ENCODE measurements at regions of chr2 and their contacts with region 1.

Region 1: GRCh38 chr2:10812362-10813162 is at the start of gene PDIA6:
- DNase-seq: peak; percentile 97
- ATAC-seq: peak; percentile 86
- H3K4me3 ChIP-seq: peak within 1 kb of the TSS; percentile 62 to 97 (median 72)
- H3K4me3 Mint-ChIP-seq: peak within 1 kb of the TSS; percentile 92
- H3K27ac ChIP-seq: peak within 1 kb of the TSS; percentile 71 to 80
- H3K27ac Mint-ChIP-seq: peak within 1 kb of the TSS; percentile 93
- H3K4me1 ChIP-seq: peaks cover 30 to 40% of the 10 kb centered on the region in 2 donors
- H3K4me1 Mint-ChIP-seq: peaks cover 39% of the 10 kb centered on the region
- H3K27me3 ChIP-seq: no peaks in the 10 kb centered on the region
- H3K27me3 Mint-ChIP-seq: no peaks in the 10 kb centered on the region
- CTCF ChIP-seq: no peak
- total RNA-seq, gene PDIA6: 47.9 and 53.8 TPM in 2 replicates

Region 2: DNA sequence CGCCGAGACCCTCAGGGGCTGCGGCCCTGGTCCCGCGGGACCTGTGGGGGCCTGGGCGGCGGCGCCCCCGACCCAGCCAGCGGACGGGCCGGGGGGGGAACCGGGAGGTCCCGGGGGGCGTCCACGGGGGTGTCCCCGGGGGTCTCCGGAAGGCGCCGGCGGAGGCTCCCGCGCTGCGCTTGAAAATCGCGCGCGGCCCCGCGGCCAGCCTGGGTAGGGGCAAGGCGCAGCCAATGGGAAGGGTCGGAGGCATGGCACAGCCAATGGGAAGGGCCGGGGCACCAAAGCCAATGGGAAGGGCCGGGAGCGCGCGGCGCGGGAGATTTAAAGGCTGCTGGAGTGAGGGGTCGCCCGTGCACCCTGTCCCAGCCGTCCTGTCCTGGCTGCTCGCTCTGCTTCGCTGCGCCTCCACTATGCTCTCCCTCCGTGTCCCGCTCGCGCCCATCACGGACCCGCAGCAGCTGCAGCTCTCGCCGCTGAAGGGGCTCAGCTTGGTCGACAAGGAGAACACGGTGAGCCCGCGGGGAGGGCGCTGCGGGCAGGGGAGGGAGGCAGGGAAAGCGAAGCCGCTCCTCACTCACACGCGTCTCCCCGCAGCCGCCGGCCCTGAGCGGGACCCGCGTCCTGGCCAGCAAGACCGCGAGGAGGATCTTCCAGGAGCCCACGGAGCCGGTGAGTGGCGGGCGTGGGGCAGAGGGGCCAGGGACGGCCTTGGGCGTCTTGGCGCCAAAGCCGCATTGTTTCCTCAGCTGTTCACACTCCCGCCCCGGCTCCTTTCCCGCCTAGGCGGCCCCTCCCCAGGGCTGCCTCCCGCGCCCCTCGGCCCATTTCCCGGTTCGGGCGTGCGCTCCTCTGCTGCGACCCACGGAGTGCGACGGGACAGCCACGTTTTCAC is 689.9 kb before region 1 on chr2 and contains the start of gene RRM2:
- CTCF ChIA-PET with region 1: no interaction called
- POLR2A ChIA-PET with region 1: no interaction called
- intact Hi-C with region 1: loop called (anchors 2 kb)
- DNase-seq: peak; percentile 91
- ATAC-seq: peak; percentile 82
- H3K4me3 ChIP-seq: peak within 1 kb of the TSS in 4 of 5 experiments; percentile 42 to 77 (median 54)
- H3K4me3 Mint-ChIP-seq: peak within 1 kb of the TSS; percentile 98
- H3K27ac ChIP-seq: no peak within 1 kb of the TSS
- H3K27ac Mint-ChIP-seq: peak within 1 kb of the TSS; percentile 59
- H3K4me1 ChIP-seq: peaks cover 29 to 32% of the 10 kb centered on the region in 2 donors
- H3K4me1 Mint-ChIP-seq: peaks cover 30% of the 10 kb centered on the region
- H3K27me3 ChIP-seq: peaks cover 0 to 17% (median 8%) of the 10 kb centered on the region in 4 experiments
- H3K27me3 Mint-ChIP-seq: peaks cover 10% of the 10 kb centered on the region
- CTCF ChIP-seq: no peak
- total RNA-seq, gene RRM2: 1.2 and 1.3 TPM in 2 replicates

Region 3: GRCh38 chr2:10514743-10515142 is 297.8 kb before region 1 on chr2:
- CTCF ChIA-PET with region 1: no interaction called
- POLR2A ChIA-PET with region 1: no interaction called
- intact Hi-C with region 1: no loop called
- DNase-seq: no peak
- ATAC-seq: no peak
- H3K4me3 ChIP-seq: no peak overlapping the region
- H3K4me3 Mint-ChIP-seq: no peak overlapping the region
- H3K27ac ChIP-seq: no peak overlapping the region
- H3K27ac Mint-ChIP-seq: no peak overlapping the region
- H3K4me1 ChIP-seq: no peaks in the 10 kb centered on the region
- H3K4me1 Mint-ChIP-seq: no peaks in the 10 kb centered on the region
- H3K27me3 ChIP-seq: peaks cover 0 to 4% (median 0%) of the 10 kb centered on the region in 4 experiments
- H3K27me3 Mint-ChIP-seq: no peaks in the 10 kb centered on the region
- CTCF ChIP-seq: no peak

Region 4: DNA sequence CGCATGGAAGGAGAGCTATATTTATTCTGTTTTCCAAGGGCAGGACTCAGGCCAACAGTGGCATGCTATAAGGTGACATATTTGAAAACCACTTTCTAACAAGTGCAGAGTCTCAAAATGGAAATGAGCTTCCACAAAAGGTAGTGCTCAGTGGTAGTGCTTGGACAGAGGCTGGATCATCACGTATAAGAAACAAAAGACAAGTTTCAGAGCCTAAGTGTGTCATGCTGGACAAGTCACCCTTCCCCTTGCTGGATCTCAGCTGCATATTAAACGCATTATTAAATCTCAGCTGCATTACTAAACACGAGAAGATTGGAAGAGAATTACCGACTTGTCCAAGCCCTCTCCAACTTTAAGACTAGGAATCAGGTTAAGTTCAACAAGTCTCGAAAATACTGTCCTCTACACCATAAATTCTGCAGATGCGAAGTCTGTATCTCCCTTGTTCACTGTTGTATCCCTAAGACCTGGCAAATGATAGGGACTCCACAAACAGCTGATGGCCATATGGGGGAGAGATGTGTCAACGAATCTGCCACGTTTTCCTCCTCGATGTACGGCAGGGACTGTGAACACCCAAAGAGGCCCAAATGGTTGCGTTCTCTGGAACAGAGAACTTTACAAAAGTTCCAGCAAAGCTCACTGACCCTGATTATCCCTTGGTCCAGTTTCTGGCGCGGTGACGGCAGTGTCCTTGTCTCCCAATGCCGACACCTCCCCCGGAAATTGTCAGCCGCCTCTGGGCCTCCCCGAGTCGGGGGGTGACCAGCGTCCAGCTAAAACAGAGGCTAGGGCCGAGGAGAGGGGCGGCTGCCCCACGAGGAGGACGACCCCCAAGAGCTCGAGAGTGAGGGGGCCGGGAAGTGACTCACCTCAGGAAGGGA is 123.4 kb before region 1 on chr2:
- CTCF ChIA-PET with region 1: no interaction called
- POLR2A ChIA-PET with region 1: interaction called, 7 read pairs
- intact Hi-C with region 1: loop called (anchors 1 kb)
- DNase-seq: no peak
- ATAC-seq: no peak
- H3K4me3 ChIP-seq: peak overlapping the region; percentile 73 to 100 (median 98)
- H3K4me3 Mint-ChIP-seq: no peak overlapping the region
- H3K27ac ChIP-seq: peak overlapping the region; percentile 87 to 92
- H3K27ac Mint-ChIP-seq: no peak overlapping the region
- H3K4me1 ChIP-seq: peaks cover 19 to 24% of the 10 kb centered on the region in 2 donors
- H3K4me1 Mint-ChIP-seq: peaks cover 9% of the 10 kb centered on the region
- H3K27me3 ChIP-seq: no peaks in the 10 kb centered on the region
- H3K27me3 Mint-ChIP-seq: no peaks in the 10 kb centered on the region
- CTCF ChIP-seq: no peak

Region 5: GRCh38 chr2:10832203-10832936 is 19.8 kb after region 1 on chr2:
- CTCF ChIA-PET with region 1: interaction called, 10 read pairs
- POLR2A ChIA-PET with region 1: no interaction called
- intact Hi-C with region 1: no loop called
- DNase-seq: peak; percentile 82
- ATAC-seq: peak; percentile 84
- H3K4me3 ChIP-seq: no peak overlapping the region
- H3K4me3 Mint-ChIP-seq: peak overlapping the region; percentile 15
- H3K27ac ChIP-seq: no peak overlapping the region
- H3K27ac Mint-ChIP-seq: no peak overlapping the region
- H3K4me1 ChIP-seq: peaks cover 10 to 12% of the 10 kb centered on the region in 2 donors
- H3K4me1 Mint-ChIP-seq: peaks cover 8% of the 10 kb centered on the region
- H3K27me3 ChIP-seq: peaks cover 0 to 42% (median 8%) of the 10 kb centered on the region in 4 experiments
- H3K27me3 Mint-ChIP-seq: peaks cover 43% of the 10 kb centered on the region
- CTCF ChIP-seq: peak; percentile 98

Region 6: DNA sequence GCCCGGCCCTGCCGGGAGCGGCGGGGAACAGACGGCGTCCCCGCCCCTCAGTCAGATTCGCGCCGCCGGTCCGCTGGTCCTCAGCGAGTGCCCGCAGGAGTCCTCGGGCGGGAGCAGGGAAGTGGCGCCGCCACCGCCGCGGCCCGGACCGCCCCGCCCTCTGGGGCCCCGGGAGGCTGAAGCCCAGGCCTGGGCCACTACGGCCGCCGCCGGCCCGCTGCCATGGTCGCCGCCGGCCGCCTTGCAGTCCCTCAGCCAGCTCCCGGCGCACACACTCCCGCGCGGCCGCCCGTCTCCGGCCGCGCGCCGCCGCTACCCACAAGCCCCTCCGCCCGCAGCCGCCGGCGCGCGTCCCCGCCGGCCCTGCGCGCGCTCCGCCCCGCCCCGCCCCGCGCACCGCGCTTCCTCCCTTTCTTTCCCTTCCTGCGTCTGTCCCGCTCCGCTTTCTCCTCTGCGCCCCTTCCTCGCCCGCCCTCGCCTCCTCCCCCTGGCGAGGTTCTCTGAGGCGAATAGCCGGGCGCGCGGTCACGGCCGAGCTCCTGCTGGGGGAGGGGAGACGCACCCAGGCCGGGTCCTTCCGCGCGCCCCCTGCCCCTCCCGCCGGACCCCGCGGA is 531.9 kb after region 1 on chr2 and contains the start of gene ROCK2:
- CTCF ChIA-PET with region 1: no interaction called
- POLR2A ChIA-PET with region 1: no interaction called
- intact Hi-C with region 1: loop called (anchors 5 kb)
- DNase-seq: peak; percentile 83
- ATAC-seq: peak; percentile 69
- H3K4me3 ChIP-seq: peak within 1 kb of the TSS; percentile 56 to 91 (median 81)
- H3K4me3 Mint-ChIP-seq: peak within 1 kb of the TSS; percentile 99
- H3K27ac ChIP-seq: peak within 1 kb of the TSS; percentile 42 to 67
- H3K27ac Mint-ChIP-seq: peak within 1 kb of the TSS; percentile 97
- H3K4me1 ChIP-seq: peaks cover 16 to 19% of the 10 kb centered on the region in 2 donors
- H3K4me1 Mint-ChIP-seq: peaks cover 38% of the 10 kb centered on the region
- H3K27me3 ChIP-seq: no peaks in the 10 kb centered on the region
- H3K27me3 Mint-ChIP-seq: no peaks in the 10 kb centered on the region
- CTCF ChIP-seq: no peak
- total RNA-seq, gene ROCK2: 30.2 and 32.8 TPM in 2 replicates

Region 7: DNA sequence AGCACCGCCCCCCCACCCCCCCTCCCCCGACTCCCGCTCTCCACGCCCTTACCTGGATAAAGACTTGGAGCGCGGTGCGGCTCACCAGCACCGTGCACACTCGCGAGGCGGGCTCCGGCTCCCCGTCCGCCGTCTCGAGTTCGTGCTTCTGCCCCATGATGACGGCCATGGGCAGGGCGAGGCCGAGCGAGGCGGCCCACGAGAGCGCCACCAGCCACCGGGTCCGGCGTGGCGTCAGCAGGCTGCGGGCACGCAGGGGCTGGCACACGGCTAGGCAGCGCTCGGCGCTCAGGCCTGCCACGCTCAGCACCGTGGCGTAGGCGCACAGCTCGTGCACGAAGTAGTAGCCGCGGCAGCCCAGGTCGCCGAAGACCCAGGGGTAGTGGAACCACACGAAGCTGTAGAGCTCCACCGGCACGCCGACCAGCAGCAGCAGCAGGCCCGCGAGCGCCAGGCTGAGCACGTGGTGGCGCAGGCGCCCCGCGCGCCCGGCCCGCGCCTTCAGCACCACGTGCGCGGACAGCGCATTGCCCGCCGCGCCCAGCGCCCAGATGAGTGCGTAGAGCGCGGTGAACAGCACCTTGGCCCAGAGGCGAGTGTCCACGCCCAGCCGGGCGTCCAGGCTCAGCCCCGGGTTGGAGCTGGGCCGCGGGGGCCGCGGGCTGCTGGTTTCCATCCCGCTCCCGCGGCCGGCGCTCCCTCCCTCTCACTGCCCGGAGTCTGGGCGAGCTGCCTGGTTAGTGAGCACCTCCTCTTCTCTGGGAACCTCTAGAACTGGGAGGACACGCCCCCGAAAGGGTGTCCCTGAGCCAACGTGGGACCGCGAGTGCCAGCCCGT is 857.1 kb after region 1 on chr2 and contains the start of gene NTSR2:
- CTCF ChIA-PET with region 1: no interaction called
- POLR2A ChIA-PET with region 1: no interaction called
- intact Hi-C with region 1: no loop called
- DNase-seq: peak; percentile 41
- ATAC-seq: peak; percentile 43
- H3K4me3 ChIP-seq: no peak within 1 kb of the TSS
- H3K4me3 Mint-ChIP-seq: no peak within 1 kb of the TSS
- H3K27ac ChIP-seq: no peak within 1 kb of the TSS
- H3K27ac Mint-ChIP-seq: no peak within 1 kb of the TSS
- H3K4me1 ChIP-seq: peaks cover 6 to 9% of the 10 kb centered on the region in 2 donors
- H3K4me1 Mint-ChIP-seq: peaks cover 13% of the 10 kb centered on the region
- H3K27me3 ChIP-seq: peaks cover 0 to 21% (median 10%) of the 10 kb centered on the region in 4 experiments
- H3K27me3 Mint-ChIP-seq: peaks cover 35% of the 10 kb centered on the region
- CTCF ChIP-seq: no peak
- total RNA-seq, gene NTSR2: not detected in 2 replicates

Region 8: DNA sequence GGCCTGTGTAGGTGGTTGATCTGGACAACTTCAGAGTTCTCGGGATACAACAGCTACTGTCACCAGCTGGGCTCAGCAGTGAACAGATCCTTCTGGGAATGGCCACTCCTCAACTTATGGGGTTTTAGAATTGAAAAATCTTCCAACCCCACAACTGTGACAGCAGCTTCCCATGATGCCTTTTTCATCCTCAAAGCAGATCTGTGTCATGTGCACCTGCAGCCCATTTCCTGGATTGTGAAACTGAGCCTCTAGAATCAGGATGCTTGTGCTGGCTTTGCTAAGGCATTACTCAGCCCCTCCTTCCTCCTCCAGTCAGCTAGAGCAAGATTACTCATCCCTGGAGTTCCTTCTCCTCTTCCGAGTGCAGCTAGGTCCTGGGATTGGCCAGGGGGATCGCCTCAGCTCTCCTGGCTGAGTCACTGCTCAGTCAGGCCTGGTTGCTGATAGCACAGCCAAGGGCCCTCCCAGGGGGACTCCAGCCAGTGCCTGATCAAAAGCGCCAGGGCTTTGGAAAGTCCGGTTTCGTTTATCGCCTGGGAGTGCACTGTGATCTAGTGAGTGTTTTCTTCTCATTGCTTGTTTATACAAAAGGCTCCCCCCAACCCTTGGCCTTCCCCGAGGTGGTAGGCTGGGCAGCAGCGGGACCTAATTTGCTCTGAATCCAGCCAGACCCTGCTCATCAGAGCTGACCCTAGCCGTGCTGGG is 931.4 kb after region 1 on chr2:
- CTCF ChIA-PET with region 1: no interaction called
- POLR2A ChIA-PET with region 1: no interaction called
- intact Hi-C with region 1: loop called (anchors 2 kb)
- DNase-seq: peak; percentile 72
- ATAC-seq: peak; percentile 43
- H3K4me3 ChIP-seq: peak overlapping the region in 2 of 5 experiments; percentile 3 to 17
- H3K4me3 Mint-ChIP-seq: peak overlapping the region; percentile 63
- H3K27ac ChIP-seq: no peak overlapping the region
- H3K27ac Mint-ChIP-seq: peak overlapping the region; percentile 85
- H3K4me1 ChIP-seq: peaks cover 37 to 52% of the 10 kb centered on the region in 2 donors
- H3K4me1 Mint-ChIP-seq: peaks cover 49% of the 10 kb centered on the region
- H3K27me3 ChIP-seq: no peaks in the 10 kb centered on the region
- H3K27me3 Mint-ChIP-seq: no peaks in the 10 kb centered on the region
- CTCF ChIP-seq: no peak